Activated CD4-positive, alpha-beta memory T cell treated with anti-CD3 and anti-CD28 coated beads, Interleukin-2, amount 10 ng/mL, durations not matched to agents 7 days and 5 days (primary cell): ENCODE measurements at regions of chr1 and their contacts with region 1.

Region 1: DNA sequence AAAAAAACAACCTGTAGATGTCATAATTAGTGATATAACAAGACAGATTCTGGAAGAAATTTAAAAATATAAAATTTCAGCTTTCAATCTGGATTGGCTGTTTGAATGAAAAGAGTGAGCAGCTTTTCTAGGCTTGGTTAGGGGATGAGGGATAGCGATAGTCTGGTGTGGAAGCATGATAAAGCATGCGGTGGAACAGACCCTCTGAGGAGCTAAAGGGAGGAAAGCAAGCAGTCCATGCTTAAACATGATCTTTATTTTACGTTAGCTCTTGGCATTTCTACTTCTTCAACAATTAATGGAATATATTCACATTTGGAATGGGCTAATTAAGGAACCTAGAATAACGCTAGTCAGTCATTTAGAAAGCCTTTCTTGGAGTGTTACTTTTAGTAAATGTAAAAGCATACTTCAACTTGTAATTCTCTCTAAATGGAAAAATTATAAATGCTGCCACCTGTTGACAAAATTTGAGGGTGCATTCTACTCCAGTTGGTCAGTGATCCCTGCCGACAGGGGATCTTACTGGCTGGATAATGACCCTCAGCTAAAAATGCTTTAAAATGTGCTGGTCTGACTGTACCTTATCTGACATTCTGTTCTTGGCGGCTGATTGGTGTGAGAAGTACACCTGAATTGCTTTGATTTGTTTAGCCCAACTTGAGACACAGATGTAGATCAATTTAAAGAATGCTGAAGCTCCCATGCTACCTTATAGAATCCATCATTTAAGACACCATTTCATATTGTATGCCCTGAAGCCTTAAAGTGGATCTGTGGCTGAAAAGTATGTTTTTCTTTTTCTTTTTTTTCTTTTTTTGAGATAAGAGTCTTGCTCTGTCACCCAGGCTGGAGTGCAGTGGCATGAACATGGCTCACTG is 61.2 kb downstream of the AK4 start:
- DNase-seq: no peak
- H3K4me3 Mint-ChIP-seq: no peak overlapping the region
- H3K27ac Mint-ChIP-seq: no peak overlapping the region
- H3K4me1 Mint-ChIP-seq: peaks cover 26% of the 10 kb centered on the region
- H3K27me3 Mint-ChIP-seq: no peaks in the 10 kb centered on the region

Region 2: DNA sequence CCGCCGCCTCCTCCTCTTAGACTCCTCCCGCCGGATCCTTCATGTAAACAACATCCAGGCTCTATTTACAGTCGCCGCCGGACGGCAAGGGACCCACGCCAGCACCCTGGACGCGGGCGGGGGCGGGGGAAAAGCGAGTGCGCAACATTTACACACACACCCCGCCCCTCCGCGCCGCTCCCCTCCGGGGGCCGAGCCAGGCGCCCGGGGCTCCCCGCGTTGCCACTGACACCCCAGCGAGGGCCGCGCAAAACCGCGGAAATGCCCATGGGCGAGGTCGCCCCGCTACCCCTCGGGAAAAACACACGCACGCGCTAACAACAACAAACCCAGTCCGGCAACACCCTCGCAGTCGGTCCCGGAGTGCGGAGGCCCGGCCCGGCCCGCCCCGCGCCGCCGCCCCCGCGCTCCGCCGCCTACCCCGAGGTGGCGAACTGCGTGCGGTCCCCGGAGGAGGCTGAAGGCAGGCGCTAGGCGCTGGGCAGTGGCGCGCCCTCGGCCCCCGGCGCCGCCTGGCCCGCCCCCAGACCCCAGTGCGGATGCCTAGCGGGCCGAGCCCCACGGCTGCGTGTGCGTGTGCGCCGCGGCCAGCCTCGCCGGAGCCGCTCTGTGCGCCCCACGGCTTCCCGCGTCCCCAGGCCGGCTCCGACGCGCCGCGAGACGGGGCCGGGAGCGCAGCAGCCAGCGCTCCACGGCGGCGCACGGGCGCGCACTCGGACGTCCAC is 142.3 kb before region 1 on chr1:
- CTCF ChIA-PET with region 1: interaction called, 18 read pairs
- POLR2A ChIA-PET with region 1: no interaction called
- DNase-seq: peak; percentile 66
- H3K4me3 Mint-ChIP-seq: peak overlapping the region; percentile 90
- H3K27ac Mint-ChIP-seq: peak overlapping the region; percentile 54
- H3K4me1 Mint-ChIP-seq: peaks cover 41% of the 10 kb centered on the region
- H3K27me3 Mint-ChIP-seq: no peaks in the 10 kb centered on the region